ENCODE measurements at regions of chr15 and their contacts with region 1.

Region 1: GRCh38 chr15:44676676-44677075 is 13.2 kb upstream of the SPG11 start:
- DNase-seq: no peak
- ATAC-seq: peak; percentile 45
- H3K4me3 Mint-ChIP-seq: peak overlapping the region; percentile 73
- H3K27ac Mint-ChIP-seq: peak overlapping the region; percentile 85
- H3K4me1 Mint-ChIP-seq: peaks cover 61% of the 10 kb centered on the region
- H3K27me3 Mint-ChIP-seq: no peaks in the 10 kb centered on the region

Region 2: DNA sequence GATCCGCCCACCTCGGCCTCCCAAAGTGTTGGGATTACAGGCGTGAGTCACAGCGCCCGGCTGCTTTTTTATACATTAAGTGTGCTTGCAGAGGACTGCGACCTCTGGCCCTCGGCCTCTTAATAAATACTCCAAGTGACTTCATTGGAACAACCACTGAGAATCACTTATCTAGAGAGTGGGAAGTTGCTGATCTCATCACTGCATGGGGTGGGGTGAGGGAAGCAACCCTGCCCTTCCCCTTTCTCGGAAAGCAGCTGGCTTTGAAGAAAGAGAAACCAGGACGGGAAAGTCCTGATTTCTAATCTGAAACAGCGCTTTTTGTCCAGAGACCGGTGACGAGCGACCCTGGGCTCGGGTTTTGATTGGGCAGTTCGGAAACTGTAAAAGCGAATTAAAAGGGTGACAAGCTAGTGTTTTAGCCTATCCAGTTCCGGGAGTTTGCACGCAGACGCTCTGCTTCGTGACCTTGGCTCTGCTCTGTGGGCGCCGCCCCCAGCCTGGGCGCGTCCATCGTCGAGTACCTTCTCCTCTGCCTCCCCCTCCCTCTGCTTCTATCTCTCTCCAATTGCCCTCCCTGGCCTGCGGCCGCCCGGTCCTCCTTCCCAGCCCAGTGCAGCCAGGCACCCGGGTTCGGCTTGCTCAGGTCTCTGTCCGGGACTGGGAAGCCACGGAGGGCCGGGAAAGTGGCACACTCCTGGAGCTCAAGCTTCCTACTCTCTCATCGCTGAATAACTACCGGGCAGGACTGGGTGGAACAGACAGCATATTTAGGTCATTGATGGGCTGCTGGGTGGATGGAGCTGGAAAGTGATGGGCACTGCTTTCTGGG is 52.1 kb after region 1 on chr15:
- POLR2A ChIA-PET with region 1: interaction called, 622 read pairs
- DNase-seq: peak; percentile 91
- ATAC-seq: peak; percentile 79
- H3K4me3 Mint-ChIP-seq: peak overlapping the region; percentile 98
- H3K27ac Mint-ChIP-seq: peak overlapping the region; percentile 100
- H3K4me1 Mint-ChIP-seq: peaks cover 62% of the 10 kb centered on the region
- H3K27me3 Mint-ChIP-seq: no peaks in the 10 kb centered on the region